Breast epithelium (tissue), 4 donors: ENCODE measurements at regions of chr10 and their contacts with region 1.

Region 1: GRCh38 chr10:132316133-132316532 is 8.4 kb upstream of the STK32C start:
- DNase-seq: no peak
- H3K4me3 ChIP-seq: no peak overlapping the region
- H3K27ac ChIP-seq: no peak overlapping the region
- H3K4me1 ChIP-seq: no peaks in the 10 kb centered on the region
- H3K27me3 ChIP-seq: no peaks in the 10 kb centered on the region
- CTCF ChIP-seq: no peak
- POLR2A ChIP-seq: no peak

Region 2: GRCh38 chr10:132299371-132300336 is 16.5 kb before region 1 on chr10:
- intact Hi-C with region 1: loop called (anchors 1 kb)
- DNase-seq: peak in 1 of 2 donors; percentile 28
- H3K4me3 ChIP-seq: no peak overlapping the region
- H3K27ac ChIP-seq: no peak overlapping the region
- H3K4me1 ChIP-seq: no peaks in the 10 kb centered on the region
- H3K27me3 ChIP-seq: no peaks in the 10 kb centered on the region
- CTCF ChIP-seq: no peak
- POLR2A ChIP-seq: no peak